ENCODE measurements at regions of chr6 and their contacts with region 1.

Region 1: GRCh38 chr6:39361657-39362486 is 39.4 kb upstream of the KCNK16 start:
- DNase-seq: peak; percentile 45 to 68 (median 61)
- ATAC-seq: peak; percentile 27 to 89 (median 76)
- H3K4me3 ChIP-seq: no peak overlapping the region
- H3K27ac ChIP-seq: no peak overlapping the region
- H3K4me1 ChIP-seq: peaks cover 0 to 12% (median 3%) of the 10 kb centered on the region in 12 donors
- H3K27me3 ChIP-seq: peaks cover 0 to 8% (median 0%) of the 10 kb centered on the region in 9 donors
- CTCF ChIP-seq: peak; percentile 64 to 82 (median 76)
- POLR2A ChIP-seq: no peak

Region 2: DNA sequence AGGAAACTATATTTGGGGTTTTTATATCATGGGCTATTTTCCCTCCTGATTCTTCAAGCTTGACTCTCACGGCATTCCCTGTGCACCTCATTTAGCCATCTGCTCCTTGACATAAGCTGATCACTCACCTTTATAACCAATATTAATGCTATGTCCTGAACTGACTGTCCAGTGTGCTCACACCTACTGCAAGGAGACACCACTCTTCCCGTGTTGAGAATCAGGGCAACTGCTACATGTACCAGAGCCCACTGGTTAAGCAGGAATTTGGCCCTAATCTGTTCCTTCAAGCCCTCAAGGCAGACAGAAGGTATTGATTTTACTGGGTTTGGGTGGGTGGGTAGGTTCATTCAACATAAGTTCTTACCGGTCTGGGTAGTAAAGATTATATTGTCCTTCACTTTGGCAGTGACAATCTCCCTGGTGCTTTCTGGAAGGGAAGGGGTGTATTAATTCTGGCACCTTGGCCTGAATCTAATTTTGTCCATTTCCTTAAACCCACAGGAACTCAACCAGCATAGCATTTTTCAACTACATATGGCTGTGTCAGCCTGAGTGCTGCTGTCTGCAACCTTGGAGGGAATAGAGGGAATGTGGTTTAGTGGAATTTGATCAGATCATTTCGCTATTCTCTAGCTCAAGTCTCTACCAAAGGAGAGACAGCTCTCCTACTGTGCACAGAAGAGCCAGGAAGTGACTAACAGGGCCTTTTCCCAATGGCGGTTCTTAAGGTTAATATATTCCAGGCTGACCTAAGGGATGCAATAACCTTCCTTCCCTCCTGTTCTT is 1015.4 kb before region 1 on chr6:
- intact Hi-C with region 1: no loop called
- DNase-seq: no peak
- ATAC-seq: no peak
- H3K4me3 ChIP-seq: no peak overlapping the region
- H3K27ac ChIP-seq: no peak overlapping the region
- H3K4me1 ChIP-seq: peaks cover 0 to 26% (median 0%) of the 10 kb centered on the region in 12 donors
- H3K27me3 ChIP-seq: no peaks in the 10 kb centered on the region
- CTCF ChIP-seq: no peak
- POLR2A ChIP-seq: no peak

Region 3: GRCh38 chr6:39724787-39725631 is 363.1 kb after region 1 on chr6 and contains the start of gene KIF6:
- intact Hi-C with region 1: loop called in 1 of 10 experiments (anchors 10 kb)
- DNase-seq: peak; percentile 89 to 95 (median 94)
- ATAC-seq: peak; percentile 97 to 100 (median 100)
- H3K4me3 ChIP-seq: peak within 1 kb of the TSS; percentile 45 to 93 (median 78)
- H3K27ac ChIP-seq: peak within 1 kb of the TSS in 6 of 12 donors; percentile 38 to 73 (median 40)
- H3K4me1 ChIP-seq: peaks cover 0 to 8% (median 0%) of the 10 kb centered on the region in 12 donors
- H3K27me3 ChIP-seq: no peaks in the 10 kb centered on the region
- CTCF ChIP-seq: peak in 1 of 12 donors; percentile 27
- POLR2A ChIP-seq: no peak
- total RNA-seq, gene KIF6: 0.06 to 0.77 (median 0.51) TPM

Region 4: GRCh38 chr6:41039060-41039998 is 1677.5 kb after region 1 on chr6 and contains the start of gene UNC5CL:
- intact Hi-C with region 1: loop called in 2 of 10 experiments (anchors 10 kb)
- DNase-seq: no peak
- ATAC-seq: peak in 3 of 4 donors; percentile 48 to 64 (median 53)
- H3K4me3 ChIP-seq: no peak within 1 kb of the TSS
- H3K27ac ChIP-seq: no peak within 1 kb of the TSS
- H3K4me1 ChIP-seq: peaks cover 0 to 7% (median 0%) of the 10 kb centered on the region in 12 donors
- H3K27me3 ChIP-seq: no peaks in the 10 kb centered on the region
- CTCF ChIP-seq: peak; percentile 52 to 71 (median 60)
- POLR2A ChIP-seq: no peak
- total RNA-seq, gene UNC5CL: 0.21 to 1.1 (median 0.50) TPM

Measured in heart left ventricle (tissue), 16 donors.